Activated CD4-positive, alpha-beta T cell treated with anti-CD3 and anti-CD28 coated beads, Interleukin-2, amount 10 ng/mL, durations not matched to agents 24 days and 14 days (primary cell): ENCODE measurements at regions of chr18 and their contacts with region 1.

Region 1: GRCh38 chr18:59139371-59140298 is at the start of gene SEC11C:
- DNase-seq: peak; percentile 99
- H3K4me3 Mint-ChIP-seq: peak within 1 kb of the TSS; percentile 97
- H3K27ac Mint-ChIP-seq: peak within 1 kb of the TSS; percentile 98
- H3K4me1 Mint-ChIP-seq: peaks cover 37% of the 10 kb centered on the region
- H3K27me3 Mint-ChIP-seq: peaks cover 27% of the 10 kb centered on the region
- total RNA-seq, gene SEC11C: 125 and 126 TPM in 2 replicates

Region 2: DNA sequence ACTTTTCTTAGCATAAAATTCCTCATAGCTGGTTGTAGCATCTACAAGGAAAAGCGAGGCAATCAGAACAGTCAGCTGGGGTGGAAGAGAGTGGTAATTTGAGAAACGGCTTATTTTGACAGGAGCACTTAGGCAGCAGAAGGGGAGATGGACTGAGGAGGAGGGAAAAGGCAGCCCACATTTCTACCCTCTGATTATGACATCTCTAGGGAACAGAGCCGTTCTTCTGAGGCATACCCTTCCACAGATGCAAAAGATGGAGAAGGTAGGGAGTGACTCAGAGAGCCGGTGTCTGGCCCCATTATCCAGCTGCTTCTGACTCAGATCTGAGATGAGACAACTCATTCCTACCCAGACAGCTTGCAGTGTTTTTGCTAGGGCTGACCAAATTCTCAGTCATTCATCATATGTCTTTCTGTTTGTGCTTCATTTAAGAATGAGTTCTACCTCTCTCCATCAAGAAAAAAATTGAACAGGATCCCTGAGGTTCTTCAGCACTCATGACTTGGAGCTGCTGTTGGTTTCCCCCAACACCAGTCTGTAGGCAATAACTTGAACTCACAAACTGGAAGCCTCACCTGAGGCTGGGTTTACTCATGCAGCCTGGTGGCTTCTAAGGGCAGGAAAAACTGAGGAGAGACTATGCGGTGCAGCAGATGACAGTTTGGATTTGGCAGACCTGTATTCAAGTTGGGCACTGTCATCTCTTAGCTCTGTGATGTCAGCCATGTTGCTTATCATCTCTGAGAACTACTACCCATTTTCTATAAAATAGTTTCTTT is 15.9 kb before region 1 on chr18:
- intact Hi-C with region 1: loop called (anchors 2 kb)
- DNase-seq: no peak
- H3K4me3 Mint-ChIP-seq: no peak overlapping the region
- H3K27ac Mint-ChIP-seq: no peak overlapping the region
- H3K4me1 Mint-ChIP-seq: peaks cover 2% of the 10 kb centered on the region
- H3K27me3 Mint-ChIP-seq: peaks cover 37% of the 10 kb centered on the region

Region 3: GRCh38 chr18:59180150-59180845 is 40.7 kb after region 1 on chr18:
- intact Hi-C with region 1: no loop called
- DNase-seq: no peak
- H3K4me3 Mint-ChIP-seq: no peak overlapping the region
- H3K27ac Mint-ChIP-seq: no peak overlapping the region
- H3K4me1 Mint-ChIP-seq: no peaks in the 10 kb centered on the region
- H3K27me3 Mint-ChIP-seq: peaks cover 1% of the 10 kb centered on the region

Region 4: DNA sequence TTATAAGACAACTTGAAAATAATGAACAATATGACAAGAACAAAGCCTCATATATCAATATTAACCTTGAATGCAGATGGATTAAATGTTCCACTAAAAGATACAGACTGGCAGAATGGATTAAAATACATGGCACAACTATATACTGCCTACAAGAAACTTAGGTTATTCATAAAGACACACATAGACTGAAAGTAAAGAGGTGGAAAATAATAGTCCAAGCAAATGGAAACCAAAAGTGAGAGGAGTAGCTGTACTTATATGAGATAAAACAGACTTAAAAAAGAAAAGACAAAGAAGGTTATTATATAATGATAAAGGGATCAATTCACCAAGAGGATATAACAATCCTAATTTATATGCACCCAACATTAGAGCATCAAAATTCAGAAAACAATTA is 201.2 kb after region 1 on chr18:
- intact Hi-C with region 1: loop called (anchors 1 kb)
- DNase-seq: no peak
- H3K4me3 Mint-ChIP-seq: peak overlapping the region; percentile 58
- H3K27ac Mint-ChIP-seq: peak overlapping the region; percentile 72
- H3K4me1 Mint-ChIP-seq: peaks cover 42% of the 10 kb centered on the region
- H3K27me3 Mint-ChIP-seq: no peaks in the 10 kb centered on the region